ENCODE measurements at regions of chr2 and their contacts with region 1.

Region 1: GRCh38 chr2:172710584-172711024 is 25.0 kb upstream of the RAPGEF4 start:
- DNase-seq: peak in 7 of 9 experiments; percentile 16 to 60 (median 47)
- ATAC-seq: no peak
- H3K4me3 ChIP-seq: no peak overlapping the region
- H3K4me3 Mint-ChIP-seq: no peak overlapping the region
- H3K27ac ChIP-seq: no peak overlapping the region
- H3K27ac Mint-ChIP-seq: no peak overlapping the region
- H3K4me1 ChIP-seq: no peaks in the 10 kb centered on the region
- H3K4me1 Mint-ChIP-seq: no peaks in the 10 kb centered on the region
- H3K27me3 ChIP-seq: no peaks in the 10 kb centered on the region
- H3K27me3 Mint-ChIP-seq: peaks cover 3% of the 10 kb centered on the region
- CTCF ChIP-seq: peak; percentile 68

Region 2: DNA sequence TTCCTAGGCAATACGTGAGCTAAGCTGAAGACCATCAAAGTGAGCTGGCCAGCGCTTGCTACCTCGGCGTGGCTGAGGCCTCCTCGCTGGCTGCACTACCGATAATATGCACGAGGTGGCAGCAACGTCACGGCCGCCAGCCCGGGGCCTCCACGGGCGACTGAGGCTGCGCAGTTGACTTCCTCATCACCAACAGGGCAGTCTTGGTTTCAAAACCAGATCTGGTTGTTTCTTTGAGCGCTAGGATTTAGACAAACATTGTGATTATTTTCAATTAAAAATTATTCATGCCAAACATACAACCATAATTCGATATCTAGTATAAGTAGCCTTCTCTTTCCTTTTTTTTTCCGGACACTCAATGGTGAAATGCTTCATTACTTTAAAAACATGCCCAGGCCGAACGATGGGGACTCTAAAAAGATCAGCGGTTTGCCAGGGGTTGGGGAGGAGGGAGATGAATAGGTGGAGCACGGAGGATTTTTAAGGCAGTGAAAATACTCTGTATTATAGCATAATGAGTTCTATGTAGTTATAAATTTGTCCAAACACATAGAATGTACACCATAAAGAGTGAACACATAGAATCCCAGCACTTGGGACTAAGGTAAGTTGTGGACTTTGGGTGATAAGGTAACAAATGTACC is 1136.3 kb before region 1 on chr2:
- CTCF ChIA-PET with region 1: interaction called, 4 read pairs
- POLR2A ChIA-PET with region 1: no interaction called
- intact Hi-C with region 1: loop called in 1 of 2 experiments (anchors 2 kb)
- DNase-seq: peak; percentile 62 to 87 (median 78)
- ATAC-seq: peak; percentile 100
- H3K4me3 ChIP-seq: no peak overlapping the region
- H3K4me3 Mint-ChIP-seq: peak overlapping the region; percentile 42
- H3K27ac ChIP-seq: no peak overlapping the region
- H3K27ac Mint-ChIP-seq: no peak overlapping the region
- H3K4me1 ChIP-seq: no peaks in the 10 kb centered on the region
- H3K4me1 Mint-ChIP-seq: peaks cover 6% of the 10 kb centered on the region
- H3K27me3 ChIP-seq: no peaks in the 10 kb centered on the region
- H3K27me3 Mint-ChIP-seq: peaks cover 2% of the 10 kb centered on the region
- CTCF ChIP-seq: peak; percentile 97

Region 3: GRCh38 chr2:171598713-171599319 is 1111.8 kb before region 1 on chr2:
- CTCF ChIA-PET with region 1: no interaction called
- POLR2A ChIA-PET with region 1: no interaction called
- intact Hi-C with region 1: loop called in 1 of 2 experiments (anchors 1 kb)
- DNase-seq: peak in 8 of 9 experiments; percentile 9 to 75 (median 48)
- ATAC-seq: peak; percentile 95
- H3K4me3 ChIP-seq: no peak overlapping the region
- H3K4me3 Mint-ChIP-seq: no peak overlapping the region
- H3K27ac ChIP-seq: no peak overlapping the region
- H3K27ac Mint-ChIP-seq: no peak overlapping the region
- H3K4me1 ChIP-seq: peaks cover 4% of the 10 kb centered on the region
- H3K4me1 Mint-ChIP-seq: peaks cover 4% of the 10 kb centered on the region
- H3K27me3 ChIP-seq: no peaks in the 10 kb centered on the region
- H3K27me3 Mint-ChIP-seq: peaks cover 4% of the 10 kb centered on the region
- CTCF ChIP-seq: peak; percentile 82

Region 4: GRCh38 chr2:171703574-171704347 is 1006.8 kb before region 1 on chr2:
- CTCF ChIA-PET with region 1: interaction called, 4 read pairs
- POLR2A ChIA-PET with region 1: no interaction called
- intact Hi-C with region 1: loop called (anchors 1 to 10 kb)
- DNase-seq: peak in 2 of 9 experiments; percentile 47 to 59
- ATAC-seq: no peak
- H3K4me3 ChIP-seq: no peak overlapping the region
- H3K4me3 Mint-ChIP-seq: no peak overlapping the region
- H3K27ac ChIP-seq: no peak overlapping the region
- H3K27ac Mint-ChIP-seq: peak overlapping the region; percentile 15
- H3K4me1 ChIP-seq: no peaks in the 10 kb centered on the region
- H3K4me1 Mint-ChIP-seq: peaks cover 7% of the 10 kb centered on the region
- H3K27me3 ChIP-seq: no peaks in the 10 kb centered on the region
- H3K27me3 Mint-ChIP-seq: no peaks in the 10 kb centered on the region
- CTCF ChIP-seq: peak; percentile 54

Region 5: GRCh38 chr2:172172513-172173173 is 538.0 kb before region 1 on chr2:
- CTCF ChIA-PET with region 1: interaction called, 7 read pairs
- POLR2A ChIA-PET with region 1: no interaction called
- intact Hi-C with region 1: loop called (anchors 1 to 2 kb)
- DNase-seq: peak; percentile 10 to 84 (median 62)
- ATAC-seq: peak; percentile 94
- H3K4me3 ChIP-seq: peak overlapping the region; percentile 57 to 66
- H3K4me3 Mint-ChIP-seq: peak overlapping the region; percentile 68
- H3K27ac ChIP-seq: no peak overlapping the region
- H3K27ac Mint-ChIP-seq: no peak overlapping the region
- H3K4me1 ChIP-seq: peaks cover 4% of the 10 kb centered on the region
- H3K4me1 Mint-ChIP-seq: peaks cover 5% of the 10 kb centered on the region
- H3K27me3 ChIP-seq: no peaks in the 10 kb centered on the region
- H3K27me3 Mint-ChIP-seq: no peaks in the 10 kb centered on the region
- CTCF ChIP-seq: peak; percentile 44

Region 6: DNA sequence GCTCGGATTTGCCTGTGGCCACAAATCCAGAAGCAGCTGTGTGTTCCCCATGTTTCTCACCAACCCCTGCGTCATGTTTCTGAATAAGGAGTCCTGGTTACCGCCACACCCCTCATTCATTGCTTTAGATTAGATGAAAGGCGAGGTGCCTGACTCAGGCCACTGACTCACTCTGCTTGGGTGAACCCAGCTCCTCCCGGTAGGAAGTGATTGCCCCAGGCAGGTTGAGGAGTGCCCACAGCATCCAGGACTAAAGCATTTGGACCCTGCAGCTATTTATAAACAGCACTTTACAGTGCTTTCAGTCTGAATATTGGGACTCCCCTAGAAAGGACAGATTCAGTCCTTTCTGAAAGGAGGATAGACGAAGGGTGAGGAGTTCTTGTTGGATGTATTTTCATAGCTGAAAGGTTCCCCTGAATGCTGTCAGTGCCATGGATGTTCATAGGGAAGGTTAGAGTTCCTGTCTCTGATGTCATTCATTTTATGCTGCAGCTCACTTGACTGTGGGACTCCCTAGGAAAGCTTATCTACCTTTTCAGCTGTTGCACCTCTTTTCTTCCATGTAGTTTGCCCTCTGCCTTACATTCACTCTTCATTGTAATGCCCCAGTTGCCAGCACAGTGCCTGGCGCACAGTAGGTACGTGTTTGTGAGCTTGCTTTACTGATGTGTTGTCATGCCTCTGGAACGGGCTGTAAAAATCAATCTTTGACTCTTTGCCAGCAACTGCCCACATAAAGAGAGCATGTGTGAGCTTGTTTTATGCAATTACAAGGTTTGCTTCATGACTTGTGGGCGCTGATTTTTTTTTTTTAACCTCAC is 268.3 kb before region 1 on chr2:
- CTCF ChIA-PET with region 1: no interaction called
- POLR2A ChIA-PET with region 1: no interaction called
- intact Hi-C with region 1: no loop called
- DNase-seq: peak in 7 of 9 experiments; percentile 27 to 66 (median 55)
- ATAC-seq: peak; percentile 45
- H3K4me3 ChIP-seq: peak overlapping the region in 1 of 2 experiments; percentile 50
- H3K4me3 Mint-ChIP-seq: peak overlapping the region; percentile 81
- H3K27ac ChIP-seq: no peak overlapping the region
- H3K27ac Mint-ChIP-seq: peak overlapping the region; percentile 88
- H3K4me1 ChIP-seq: peaks cover 82% of the 10 kb centered on the region
- H3K4me1 Mint-ChIP-seq: peaks cover 53% of the 10 kb centered on the region
- H3K27me3 ChIP-seq: no peaks in the 10 kb centered on the region
- H3K27me3 Mint-ChIP-seq: no peaks in the 10 kb centered on the region
- CTCF ChIP-seq: no peak

Region 7: GRCh38 chr2:172588931-172589330 is 121.7 kb before region 1 on chr2:
- CTCF ChIA-PET with region 1: interaction called, 12 read pairs
- POLR2A ChIA-PET with region 1: no interaction called
- intact Hi-C with region 1: loop called (anchors 1 kb)
- DNase-seq: no peak
- ATAC-seq: no peak
- H3K4me3 ChIP-seq: no peak overlapping the region
- H3K4me3 Mint-ChIP-seq: no peak overlapping the region
- H3K27ac ChIP-seq: no peak overlapping the region
- H3K27ac Mint-ChIP-seq: no peak overlapping the region
- H3K4me1 ChIP-seq: peaks cover 16% of the 10 kb centered on the region
- H3K4me1 Mint-ChIP-seq: peaks cover 44% of the 10 kb centered on the region
- H3K27me3 ChIP-seq: no peaks in the 10 kb centered on the region
- H3K27me3 Mint-ChIP-seq: no peaks in the 10 kb centered on the region
- CTCF ChIP-seq: no peak

Region 8: GRCh38 chr2:172674034-172674967 is 36.3 kb before region 1 on chr2:
- CTCF ChIA-PET with region 1: interaction called, 5 read pairs
- POLR2A ChIA-PET with region 1: interaction called, 3 read pairs
- intact Hi-C with region 1: loop called in 1 of 2 experiments (anchors 1 kb)
- DNase-seq: peak in 5 of 9 experiments; percentile 23 to 55 (median 44)
- ATAC-seq: peak; percentile 44
- H3K4me3 ChIP-seq: no peak overlapping the region
- H3K4me3 Mint-ChIP-seq: peak overlapping the region; percentile 65
- H3K27ac ChIP-seq: no peak overlapping the region
- H3K27ac Mint-ChIP-seq: no peak overlapping the region
- H3K4me1 ChIP-seq: no peaks in the 10 kb centered on the region
- H3K4me1 Mint-ChIP-seq: peaks cover 3% of the 10 kb centered on the region
- H3K27me3 ChIP-seq: no peaks in the 10 kb centered on the region
- H3K27me3 Mint-ChIP-seq: peaks cover 3% of the 10 kb centered on the region
- CTCF ChIP-seq: no peak

Measured in CD8-positive, alpha-beta T cell (primary cell).